GM10248 (cell line): ENCODE measurements at regions of chr10 and their contacts with region 1.

Region 1: DNA sequence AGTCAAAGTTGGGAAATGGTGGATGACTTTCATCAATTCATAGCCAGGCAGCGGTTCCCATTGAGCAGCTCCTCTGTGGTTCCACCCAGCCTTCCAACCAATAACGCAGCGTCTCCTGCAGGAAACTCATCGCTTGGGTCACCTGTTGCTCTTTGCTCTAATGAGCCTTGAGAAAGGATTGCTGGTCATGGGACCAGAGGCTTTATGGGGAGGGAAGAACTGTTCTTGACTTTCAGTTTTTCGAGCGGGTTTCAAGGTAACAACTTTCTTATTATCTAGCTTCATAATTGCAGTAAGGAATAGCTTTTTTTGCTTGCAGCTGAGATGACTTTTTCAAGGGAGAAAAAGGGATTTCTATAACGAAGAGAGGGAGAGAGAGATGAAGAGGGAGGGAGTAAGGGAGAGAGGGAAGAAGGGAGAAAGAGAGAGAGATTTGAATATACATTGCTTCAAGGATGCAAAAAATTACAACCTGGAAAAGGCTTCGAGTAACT is 405 bp upstream of the ENTPD1 start:
- DNase-seq: peak; percentile 66
- CTCF ChIP-seq: no peak

Region 2: DNA sequence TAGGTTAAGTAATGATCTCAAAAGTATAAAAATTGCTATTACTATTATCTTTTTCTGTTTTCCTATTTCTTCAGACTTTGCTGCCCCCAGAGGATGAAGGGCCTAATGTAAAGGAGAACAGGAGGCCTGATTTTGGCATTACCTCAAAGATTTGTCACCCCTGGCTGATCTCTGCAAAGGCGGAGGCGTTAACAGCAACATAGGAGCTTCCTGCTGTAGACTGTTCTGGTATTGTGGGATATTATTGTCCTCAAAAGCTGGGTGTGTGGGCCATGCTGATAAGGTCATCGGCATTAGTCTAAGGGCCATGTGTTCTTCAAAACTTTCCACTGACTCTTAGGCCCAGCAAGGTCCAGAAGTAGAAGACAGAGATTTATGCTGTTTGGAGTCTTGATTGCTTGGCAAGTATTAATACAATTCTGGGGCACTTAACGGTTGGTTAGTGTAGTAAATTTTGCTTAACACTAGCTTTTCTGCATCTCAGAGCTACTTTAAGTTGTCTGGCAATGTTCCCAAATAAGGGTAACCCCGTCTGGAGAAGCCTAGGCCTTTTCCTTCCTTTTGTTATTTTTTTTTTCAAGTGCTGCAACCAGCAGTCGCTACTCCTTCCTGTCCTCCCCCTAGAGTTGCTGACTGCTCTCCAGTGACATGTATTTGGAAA is 13.6 kb before region 1 on chr10:
- CTCF ChIA-PET with region 1: interaction called, 39 read pairs
- POLR2A ChIA-PET with region 1: interaction called, 11 read pairs
- DNase-seq: peak; percentile 45
- CTCF ChIP-seq: peak; percentile 37

Region 3: GRCh38 chr10:95783741-95784140 is 28.2 kb after region 1 on chr10:
- CTCF ChIA-PET with region 1: interaction called, 40 read pairs
- POLR2A ChIA-PET with region 1: interaction called, 47 read pairs
- DNase-seq: peak; percentile 26
- CTCF ChIP-seq: no peak